Mammary epithelial cell (primary cell): ENCODE measurements at regions of chr20 and their contacts with region 1.

Region 1: DNA sequence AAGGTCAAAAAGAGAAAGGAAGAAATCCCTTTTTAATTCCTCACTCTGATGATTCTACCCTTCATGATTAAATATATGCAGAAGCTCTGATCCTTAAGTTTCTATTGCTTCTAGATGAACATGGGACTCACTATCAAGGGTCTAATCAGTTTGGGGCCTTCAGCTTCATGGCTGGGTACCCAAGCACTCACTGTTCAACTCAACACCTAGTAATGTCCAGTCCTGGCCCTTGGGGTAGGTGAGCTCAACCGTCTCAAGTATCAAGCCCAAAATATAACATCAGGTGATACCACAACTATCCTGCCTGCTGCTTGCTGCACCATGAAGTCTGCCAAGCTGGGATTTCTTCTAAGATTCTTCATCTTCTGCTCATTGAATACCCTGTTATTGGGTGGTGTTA is at the start of gene SPINT4:
- DNase-seq: no peak
- H3K4me3 ChIP-seq: no peak within 1 kb of the TSS
- H3K27ac ChIP-seq: no peak within 1 kb of the TSS
- H3K4me1 ChIP-seq: peaks cover 11% of the 10 kb centered on the region
- H3K27me3 ChIP-seq: peaks cover 3% of the 10 kb centered on the region
- CTCF ChIP-seq: no peak
- total RNA-seq, gene SPINT4: not detected

Region 2: DNA sequence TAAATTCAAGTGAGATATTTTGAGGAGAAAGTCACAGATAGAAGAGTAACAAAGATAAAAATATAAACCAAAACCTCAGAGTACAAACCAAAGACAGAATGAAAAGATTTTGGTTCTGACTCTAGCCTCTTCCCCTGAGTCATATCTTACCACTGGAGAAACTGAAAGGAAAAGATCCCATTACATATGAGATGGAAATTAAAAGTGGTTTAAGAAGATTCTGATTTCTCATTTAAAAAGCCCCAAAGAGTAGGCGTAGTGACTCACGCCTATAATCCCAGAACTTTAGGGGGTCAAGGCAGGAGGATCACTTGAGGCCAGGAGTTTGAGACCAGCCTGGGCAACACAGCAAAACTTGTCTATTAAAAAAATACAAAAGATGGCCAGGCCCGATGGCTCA is 30.7 kb after region 1 on chr20:
- CTCF ChIA-PET with region 1: no interaction called
- dilution Hi-C with region 1: loop called (anchors 5 kb)
- in situ Hi-C with region 1: no loop called
- intact Hi-C with region 1: no loop called
- DNase-seq: peak; percentile 5
- H3K4me3 ChIP-seq: no peak overlapping the region
- H3K27ac ChIP-seq: no peak overlapping the region
- H3K4me1 ChIP-seq: no peaks in the 10 kb centered on the region
- H3K27me3 ChIP-seq: peaks cover 4% of the 10 kb centered on the region
- CTCF ChIP-seq: no peak